ENCODE measurements at regions of chr5 and their contacts with region 1.

Region 1: GRCh38 chr5:55387874-55388273 is 80.1 kb downstream of the MTREX start:
- DNase-seq: no peak
- H3K4me3 ChIP-seq: no peak overlapping the region
- H3K27ac ChIP-seq: no peak overlapping the region
- H3K4me1 ChIP-seq: no peaks in the 10 kb centered on the region
- H3K27me3 ChIP-seq: no peaks in the 10 kb centered on the region
- CTCF ChIP-seq: no peak

Region 2: DNA sequence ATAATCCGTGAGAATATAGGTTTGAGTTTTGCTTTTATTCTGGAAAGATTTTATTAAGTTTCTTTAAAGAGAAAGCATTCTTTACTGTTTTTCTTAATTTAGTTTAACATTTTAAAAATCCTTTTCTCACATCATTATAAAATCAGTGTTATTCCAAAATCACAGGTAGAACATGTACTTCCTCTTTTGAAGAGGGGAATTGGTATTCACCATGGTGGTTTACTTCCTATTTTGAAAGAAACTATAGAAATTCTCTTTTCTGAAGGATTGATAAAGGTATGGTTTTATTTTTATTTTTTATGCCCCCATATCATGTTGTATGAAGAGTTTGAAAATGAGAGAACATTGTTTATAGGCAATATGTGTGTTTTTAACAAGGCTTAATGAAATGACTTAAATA is 37.1 kb before region 1 on chr5:
- intact Hi-C with region 1: loop called (anchors 5 kb)
- DNase-seq: no peak
- H3K4me3 ChIP-seq: no peak overlapping the region
- H3K27ac ChIP-seq: no peak overlapping the region
- H3K4me1 ChIP-seq: no peaks in the 10 kb centered on the region
- H3K27me3 ChIP-seq: no peaks in the 10 kb centered on the region
- CTCF ChIP-seq: no peak

Region 3: DNA sequence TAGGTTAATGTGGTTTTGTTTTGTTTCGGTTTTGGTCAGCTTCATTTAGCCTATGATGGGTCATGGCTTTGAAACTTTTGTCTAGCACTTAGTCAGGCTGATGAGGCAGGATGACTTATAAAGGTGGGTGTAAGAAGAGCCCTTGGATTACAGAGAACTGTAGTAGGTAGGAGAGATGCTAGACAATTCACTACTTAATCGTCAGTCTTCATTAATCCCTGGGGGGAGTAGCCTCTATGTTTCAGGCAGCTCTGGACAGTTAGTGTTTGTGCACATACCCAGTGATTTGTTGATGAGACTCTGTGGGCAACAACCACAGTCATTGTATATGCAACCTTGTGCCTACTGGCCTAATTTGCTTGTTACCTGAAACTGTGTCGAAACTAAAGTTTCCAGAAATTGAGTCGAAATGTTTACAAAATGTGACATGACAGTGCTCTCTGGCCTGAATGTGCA is 33.2 kb after region 1 on chr5:
- intact Hi-C with region 1: no loop called
- DNase-seq: no peak
- H3K4me3 ChIP-seq: no peak overlapping the region
- H3K27ac ChIP-seq: peak overlapping the region; percentile 30 to 35
- H3K4me1 ChIP-seq: peaks cover 2 to 7% of the 10 kb centered on the region in 2 donors
- H3K27me3 ChIP-seq: no peaks in the 10 kb centered on the region
- CTCF ChIP-seq: no peak